Keratinocyte (primary cell): ENCODE measurements at regions of chr3 and their contacts with region 1.

Region 1: DNA sequence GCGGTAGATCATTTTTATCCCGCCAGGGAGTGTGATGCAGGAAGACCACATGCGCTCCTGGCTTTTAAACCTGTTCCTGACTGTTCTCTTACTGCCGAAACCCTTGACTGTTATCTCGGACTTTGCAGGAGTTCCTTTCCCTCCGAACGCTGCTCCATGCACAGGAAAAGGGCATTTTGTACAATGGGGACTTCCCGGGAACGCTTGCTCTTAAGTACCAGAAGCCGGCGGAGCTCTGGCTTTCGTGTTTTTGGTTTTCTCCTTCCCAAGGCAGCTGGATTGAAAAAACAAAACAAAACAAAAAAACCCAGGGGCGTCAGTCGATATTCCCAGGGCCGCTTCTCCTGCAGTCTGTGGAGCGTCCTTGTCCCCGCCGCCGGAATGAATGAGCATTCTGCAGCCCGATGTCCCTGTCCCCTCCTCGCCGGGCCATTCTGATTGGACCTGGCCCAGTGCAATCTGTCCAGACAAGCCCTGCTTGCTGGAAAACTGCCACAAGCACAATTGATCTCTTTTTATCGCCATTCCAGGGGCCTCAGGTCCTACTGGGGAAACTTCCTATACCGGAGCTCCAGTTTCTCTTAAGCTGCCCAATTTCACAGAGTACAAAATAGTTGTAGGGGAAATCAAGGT is 44.8 kb downstream of the SLC6A1 start:
- DNase-seq: no peak
- H3K4me3 ChIP-seq: no peak overlapping the region
- H3K27ac ChIP-seq: no peak overlapping the region
- H3K4me1 ChIP-seq: no peaks in the 10 kb centered on the region
- H3K27me3 ChIP-seq: peaks cover 8% of the 10 kb centered on the region
- CTCF ChIP-seq: no peak

Region 2: GRCh38 chr3:10950476-10951294 is 86.7 kb before region 1 on chr3:
- dilution Hi-C with region 1: loop called (anchors 10 kb)
- DNase-seq: no peak
- H3K4me3 ChIP-seq: no peak overlapping the region
- H3K27ac ChIP-seq: no peak overlapping the region
- H3K4me1 ChIP-seq: peaks cover 16% of the 10 kb centered on the region
- H3K27me3 ChIP-seq: peaks cover 14% of the 10 kb centered on the region
- CTCF ChIP-seq: peak; percentile 72 to 78 (median 77)